ENCODE measurements at regions of chr9 and their contacts with region 1.

Region 1: DNA sequence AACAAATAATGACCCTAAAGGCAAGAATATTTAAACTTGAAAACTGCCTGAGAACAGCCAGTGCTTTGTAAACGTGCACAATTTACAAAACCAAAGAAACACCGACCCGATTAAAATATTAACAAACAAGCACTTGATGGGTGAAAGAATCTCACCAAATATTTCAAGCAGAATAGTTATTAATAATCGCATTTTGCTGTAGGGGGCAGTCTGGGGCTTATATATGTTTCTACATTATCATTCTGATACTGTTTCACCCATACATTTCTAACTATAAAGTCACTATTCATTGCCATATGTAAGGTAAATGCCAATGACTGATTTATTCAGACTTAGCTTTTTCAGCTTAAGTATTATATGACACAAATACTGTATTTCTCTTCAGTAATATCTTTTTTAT is 37.7 kb downstream of the UBAP2 start:
- DNase-seq: peak; percentile 16
- ATAC-seq: no peak
- H3K4me3 Mint-ChIP-seq: no peak overlapping the region
- H3K27ac Mint-ChIP-seq: no peak overlapping the region
- H3K4me1 Mint-ChIP-seq: no peaks in the 10 kb centered on the region
- H3K27me3 Mint-ChIP-seq: no peaks in the 10 kb centered on the region
- CTCF ChIP-seq: no peak

Region 2: DNA sequence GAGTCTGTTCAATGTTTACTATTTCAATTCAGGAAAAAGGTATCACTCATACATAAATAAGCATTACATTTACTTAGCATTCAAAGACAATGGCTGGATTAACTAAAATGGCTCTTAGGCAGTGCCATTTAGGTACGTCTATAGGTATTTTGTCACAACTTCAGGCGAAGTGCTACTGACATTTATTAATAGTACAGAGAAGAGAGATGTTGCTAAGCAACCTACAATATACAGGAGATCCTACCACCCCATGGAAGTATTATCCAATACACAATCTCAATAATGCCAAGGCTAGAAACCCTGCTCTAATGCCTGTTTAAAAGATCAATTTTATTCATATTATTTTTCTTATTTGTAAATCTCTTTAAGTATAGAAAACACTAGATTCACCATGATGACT is 38.3 kb before region 1 on chr9:
- CTCF ChIA-PET with region 1: no interaction called
- POLR2A ChIA-PET with region 1: no interaction called
- intact Hi-C with region 1: no loop called
- DNase-seq: no peak
- ATAC-seq: no peak
- H3K4me3 Mint-ChIP-seq: no peak overlapping the region
- H3K27ac Mint-ChIP-seq: no peak overlapping the region
- H3K4me1 Mint-ChIP-seq: no peaks in the 10 kb centered on the region
- H3K27me3 Mint-ChIP-seq: no peaks in the 10 kb centered on the region
- CTCF ChIP-seq: no peak

Region 3: DNA sequence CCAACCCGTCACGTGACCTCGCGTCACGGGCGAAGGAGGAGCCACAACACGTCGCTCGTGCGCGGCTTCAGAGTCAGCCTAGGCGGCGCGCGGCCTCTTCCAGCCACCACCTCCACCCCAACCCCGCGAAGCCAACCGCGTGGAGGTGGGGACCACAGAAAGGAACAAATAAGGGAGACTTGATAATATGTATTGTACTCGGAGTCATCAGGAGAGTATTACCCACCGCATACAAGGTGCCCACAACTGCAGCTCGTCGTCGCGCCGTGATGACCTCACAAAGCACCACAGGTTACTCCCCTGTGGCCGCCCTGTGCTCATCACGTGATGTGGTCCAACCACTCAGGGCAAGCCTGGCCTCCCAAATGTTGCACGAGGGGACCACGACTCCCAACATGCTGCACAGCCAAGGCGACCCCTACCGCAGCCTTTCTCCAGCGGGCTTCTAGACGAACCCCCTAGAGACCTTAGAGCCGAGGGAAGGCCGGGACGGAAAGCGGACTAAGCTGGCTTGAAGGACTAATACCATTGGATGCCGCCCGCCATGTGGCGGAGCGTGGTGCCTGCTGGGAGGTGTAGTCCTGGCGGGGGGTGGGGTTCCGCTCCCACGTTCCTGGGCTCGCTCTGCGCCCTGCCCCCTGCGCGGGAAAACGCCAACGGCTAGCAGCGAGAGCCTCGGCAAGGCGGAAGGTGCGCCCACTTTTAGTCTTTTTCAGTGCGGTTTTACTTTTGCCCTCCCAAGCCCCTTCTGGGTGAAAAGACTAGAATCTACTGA is 38.1 kb after region 1 on chr9:
- CTCF ChIA-PET with region 1: no interaction called
- POLR2A ChIA-PET with region 1: interaction called, 4 read pairs
- intact Hi-C with region 1: loop called (anchors 5 kb)
- DNase-seq: peak; percentile 98
- ATAC-seq: peak; percentile 83
- H3K4me3 Mint-ChIP-seq: peak overlapping the region; percentile 87
- H3K27ac Mint-ChIP-seq: peak overlapping the region; percentile 100
- H3K4me1 Mint-ChIP-seq: peaks cover 28% of the 10 kb centered on the region
- H3K27me3 Mint-ChIP-seq: no peaks in the 10 kb centered on the region
- CTCF ChIP-seq: no peak

Measured in activated CD8-positive, alpha-beta T cell treated with anti-CD3 and anti-CD28 coated beads for 36 hours (primary cell).